Calu3 (cell line): ENCODE measurements at regions of chr2 and their contacts with region 1.

Region 1: DNA sequence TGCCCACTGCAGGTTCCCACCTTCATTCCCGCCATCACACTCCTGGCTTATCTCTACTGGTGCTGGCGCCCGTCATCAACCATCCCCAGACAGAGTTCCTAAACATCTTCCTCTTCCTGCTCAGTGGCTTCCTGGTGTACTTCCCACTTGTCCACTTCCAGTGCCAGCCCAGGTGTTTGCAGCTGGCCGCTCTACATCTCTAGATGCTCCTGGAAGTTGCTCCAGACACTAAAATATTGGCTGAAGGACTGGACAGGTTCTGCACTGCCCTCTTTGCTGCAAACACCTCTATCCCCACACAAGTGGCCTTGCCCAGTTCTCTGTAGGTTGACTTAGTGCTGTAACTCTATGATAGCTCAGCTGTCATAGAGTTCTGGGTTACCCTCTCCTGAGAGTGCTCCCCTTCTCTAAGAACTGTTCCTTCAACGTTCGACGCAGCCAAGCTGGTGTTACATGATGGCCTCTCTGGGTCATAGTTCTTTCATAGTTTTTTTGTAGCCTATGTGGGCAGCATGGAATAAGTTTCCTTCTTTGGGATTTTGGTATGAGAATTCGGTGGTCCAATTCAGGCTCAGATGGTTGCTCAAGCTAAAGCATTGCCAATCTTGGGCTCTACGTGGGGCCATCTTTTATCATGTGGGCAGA is 45.8 kb upstream of the PUM2 start:
- DNase-seq: no peak
- H3K4me3 Mint-ChIP-seq: no peak overlapping the region
- H3K27ac Mint-ChIP-seq: no peak overlapping the region
- H3K4me1 Mint-ChIP-seq: peaks cover 10% of the 10 kb centered on the region
- H3K27me3 Mint-ChIP-seq: peaks cover 39% of the 10 kb centered on the region
- CTCF ChIP-seq: no peak

Region 2: GRCh38 chr2:20438334-20439192 is 42.1 kb after region 1 on chr2:
- CTCF ChIA-PET with region 1: interaction called, 14 read pairs
- intact Hi-C with region 1: loop called (anchors 1 kb)
- DNase-seq: peak; percentile 49
- H3K4me3 Mint-ChIP-seq: peak overlapping the region; percentile 35
- H3K27ac Mint-ChIP-seq: peak overlapping the region; percentile 55
- H3K4me1 Mint-ChIP-seq: peaks cover 18% of the 10 kb centered on the region
- H3K27me3 Mint-ChIP-seq: no peaks in the 10 kb centered on the region
- CTCF ChIP-seq: no peak

Region 3: GRCh38 chr2:20650880-20651730 is 254.6 kb after region 1 on chr2 and contains the start of gene HS1BP3:
- CTCF ChIA-PET with region 1: interaction called, 11 read pairs
- intact Hi-C with region 1: no loop called
- DNase-seq: peak; percentile 94
- H3K4me3 Mint-ChIP-seq: peak within 1 kb of the TSS; percentile 82
- H3K27ac Mint-ChIP-seq: peak within 1 kb of the TSS; percentile 71
- H3K4me1 Mint-ChIP-seq: peaks cover 23% of the 10 kb centered on the region
- H3K27me3 Mint-ChIP-seq: peaks cover 21% of the 10 kb centered on the region
- CTCF ChIP-seq: peak; percentile 88
- total RNA-seq, gene HS1BP3: 26.4 and 28.5 TPM in 2 replicates